K562 (cell line): ENCODE measurements at regions of chr20 and their contacts with region 1.

Region 1: DNA sequence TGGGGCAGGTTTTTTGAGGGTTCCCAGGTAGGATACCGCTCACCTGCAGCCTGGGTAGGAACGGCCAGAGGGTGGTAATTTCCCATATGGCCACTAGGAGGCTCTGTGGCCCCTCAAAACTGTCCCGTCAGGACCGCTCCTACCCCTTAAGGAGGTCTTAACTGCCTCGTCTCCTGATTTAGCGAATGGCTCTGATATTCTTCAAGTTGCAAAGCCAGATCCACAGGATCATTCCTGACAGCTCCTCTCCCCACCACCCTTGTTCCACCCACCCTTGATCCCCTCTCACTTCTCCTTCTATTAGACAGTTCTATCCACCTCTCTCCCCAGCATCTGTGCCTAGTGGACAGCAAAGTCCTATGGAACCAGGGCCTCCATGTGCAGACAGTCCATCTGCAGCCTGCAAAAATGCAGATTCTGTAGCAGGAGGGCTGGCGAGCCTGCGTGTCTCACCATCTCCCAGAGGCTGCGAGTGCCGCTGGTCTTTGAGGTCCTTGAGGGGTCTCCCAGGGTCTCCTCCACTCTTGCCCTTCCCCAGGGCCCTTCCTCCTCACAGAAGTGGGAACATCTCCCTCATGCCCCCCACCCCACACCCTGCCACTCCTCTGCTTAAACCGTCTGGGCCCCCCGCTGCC is 34.3 kb upstream of the ZBP1 start:
- DNase-seq: peak; percentile 67 to 87 (median 86)
- ATAC-seq: peak; percentile 91
- H3K4me3 ChIP-seq: no peak overlapping the region
- H3K27ac ChIP-seq: no peak overlapping the region
- H3K4me1 ChIP-seq: peaks cover 0 to 18% of the 10 kb centered on the region in 2 experiments; a peak in 1 of 5 replicates
- H3K27me3 ChIP-seq: peaks cover 35 to 82% of the 10 kb centered on the region in 2 experiments; a peak in 4 of 5 replicates
- CTCF ChIP-seq: peak; percentile 77 to 95 (median 86)
- EP300 ChIP-seq: no peak
- POLR2A ChIP-seq: no peak
- RAD21 ChIP-seq: peak; percentile 77 to 82

Region 2: GRCh38 chr20:57582432-57583305 is 71.8 kb before region 1 on chr20:
- CTCF ChIA-PET with region 1: no interaction called
- POLR2A ChIA-PET with region 1: no interaction called
- in situ Hi-C with region 1: no loop called
- intact Hi-C with region 1: no loop called
- DNase-seq: peak; percentile 40 to 47 (median 42)
- ATAC-seq: peak; percentile 68
- H3K4me3 ChIP-seq: no peak overlapping the region
- H3K27ac ChIP-seq: 0 out of 3 replicates have a peak overlapping the region, but pooled peaks have one; percentile 3
- H3K4me1 ChIP-seq: peaks cover 30 to 59% of the 10 kb centered on the region in 2 experiments
- H3K27me3 ChIP-seq: peaks cover 16 to 60% of the 10 kb centered on the region in 2 experiments; a peak in 4 of 5 replicates
- CTCF ChIP-seq: peak; percentile 64 to 81 (median 66)
- EP300 ChIP-seq: no peak
- POLR2A ChIP-seq: no peak
- RAD21 ChIP-seq: peak in 1 of 2 experiments; percentile 18; a peak in 1 of 4 replicates

Region 3: GRCh38 chr20:57622579-57623377 is 31.7 kb before region 1 on chr20:
- CTCF ChIA-PET with region 1: no interaction called
- POLR2A ChIA-PET with region 1: interaction called, 3 read pairs
- in situ Hi-C with region 1: no loop called
- intact Hi-C with region 1: loop called (anchors 1 kb)
- DNase-seq: peak; percentile 38 to 66 (median 52)
- ATAC-seq: peak; percentile 87
- H3K4me3 ChIP-seq: no peak overlapping the region
- H3K27ac ChIP-seq: no peak overlapping the region
- H3K4me1 ChIP-seq: peaks cover 0 to 3% of the 10 kb centered on the region in 2 experiments; a peak in 4 of 5 replicates
- H3K27me3 ChIP-seq: peaks cover 24 to 60% of the 10 kb centered on the region in 2 experiments; a peak in 4 of 5 replicates
- CTCF ChIP-seq: peak; percentile 56 to 71 (median 64)
- EP300 ChIP-seq: no peak
- POLR2A ChIP-seq: no peak
- RAD21 ChIP-seq: peak in 1 of 2 experiments; percentile 59; a peak in 3 of 4 replicates

Region 4: GRCh38 chr20:58028123-58028522 is 373.6 kb after region 1 on chr20:
- CTCF ChIA-PET with region 1: no interaction called
- POLR2A ChIA-PET with region 1: no interaction called
- in situ Hi-C with region 1: no loop called
- intact Hi-C with region 1: loop called (anchors 2 kb)
- DNase-seq: peak in 1 of 4 experiments; percentile 10
- ATAC-seq: no peak
- H3K4me3 ChIP-seq: no peak overlapping the region
- H3K27ac ChIP-seq: no peak overlapping the region
- H3K4me1 ChIP-seq: no peaks in the 10 kb centered on the region
- H3K27me3 ChIP-seq: no peaks in the 10 kb centered on the region
- CTCF ChIP-seq: peak; percentile 26 to 34 (median 30); a peak in 2 of 6 replicates
- EP300 ChIP-seq: no peak
- POLR2A ChIP-seq: no peak
- RAD21 ChIP-seq: peak in 1 of 2 experiments; percentile 14; a peak in 1 of 4 replicates

Region 5: DNA sequence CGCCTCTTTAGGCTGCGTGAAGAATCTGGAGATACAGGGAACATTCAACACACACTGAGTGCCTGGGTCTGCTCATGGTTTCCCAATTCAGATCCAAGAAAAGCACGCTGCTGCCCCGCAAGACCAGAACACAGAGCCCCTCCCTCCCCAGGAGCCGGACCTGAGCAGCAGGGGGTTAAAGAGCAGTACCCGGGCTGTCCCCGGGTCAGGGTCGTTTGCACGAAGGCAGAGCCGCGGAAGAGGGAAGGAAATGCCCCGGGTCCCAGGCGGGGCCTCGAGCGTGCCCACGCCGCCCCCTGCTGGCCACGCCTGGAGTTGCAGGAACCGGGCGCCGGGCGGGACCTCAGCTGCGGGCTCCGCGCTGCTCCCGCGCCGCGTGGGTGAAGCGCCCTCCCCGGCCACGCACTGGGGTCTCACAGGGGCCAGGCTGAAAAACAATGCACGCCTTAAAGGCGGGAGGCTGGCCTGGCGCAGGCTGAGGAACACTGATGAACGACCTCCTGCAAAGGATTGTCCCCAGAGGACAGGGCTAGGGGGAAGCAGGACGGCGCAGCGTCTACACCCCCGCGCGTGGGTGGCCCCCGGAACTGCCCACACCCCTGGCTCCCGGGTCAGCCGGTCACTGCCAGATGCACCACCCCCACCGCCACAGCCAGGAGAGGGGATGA is 525.1 kb after region 1 on chr20:
- CTCF ChIA-PET with region 1: interaction called, 15 read pairs
- POLR2A ChIA-PET with region 1: no interaction called
- in situ Hi-C with region 1: no loop called
- intact Hi-C with region 1: loop called (anchors 2 kb)
- DNase-seq: peak; percentile 73 to 89 (median 84)
- ATAC-seq: peak; percentile 96
- H3K4me3 ChIP-seq: no peak overlapping the region; the same call in 1 of the 2 replicates
- H3K27ac ChIP-seq: no peak overlapping the region
- H3K4me1 ChIP-seq: peaks cover 0 to 9% of the 10 kb centered on the region in 2 experiments; a peak in 3 of 5 replicates
- H3K27me3 ChIP-seq: peaks cover 22 to 47% of the 10 kb centered on the region in 2 experiments; a peak in 4 of 5 replicates
- CTCF ChIP-seq: peak; percentile 85 to 89 (median 86)
- EP300 ChIP-seq: no peak
- POLR2A ChIP-seq: no peak
- RAD21 ChIP-seq: peak; percentile 68 to 86